HEK293 (cell line): ENCODE measurements at regions of chr6 and their contacts with region 1.

Region 1: GRCh38 chr6:122839477-122839876 is 50.4 kb downstream of the SMPDL3A start:
- H3K4me3 ChIP-seq: no peak overlapping the region
- H3K27ac ChIP-seq: no peak overlapping the region
- H3K4me1 ChIP-seq: no peaks in the 10 kb centered on the region
- CTCF ChIP-seq: 0 out of 2 replicates have a peak, but pooled peaks have one; percentile 21

Region 2: GRCh38 chr6:122491919-122492555 is 347.4 kb before region 1 on chr6:
- CTCF ChIA-PET with region 1: interaction called, 55 read pairs
- POLR2A ChIA-PET with region 1: no interaction called
- H3K4me3 ChIP-seq: no peak overlapping the region
- H3K27ac ChIP-seq: no peak overlapping the region
- H3K4me1 ChIP-seq: no peaks in the 10 kb centered on the region
- CTCF ChIP-seq: peak; percentile 53

Region 3: DNA sequence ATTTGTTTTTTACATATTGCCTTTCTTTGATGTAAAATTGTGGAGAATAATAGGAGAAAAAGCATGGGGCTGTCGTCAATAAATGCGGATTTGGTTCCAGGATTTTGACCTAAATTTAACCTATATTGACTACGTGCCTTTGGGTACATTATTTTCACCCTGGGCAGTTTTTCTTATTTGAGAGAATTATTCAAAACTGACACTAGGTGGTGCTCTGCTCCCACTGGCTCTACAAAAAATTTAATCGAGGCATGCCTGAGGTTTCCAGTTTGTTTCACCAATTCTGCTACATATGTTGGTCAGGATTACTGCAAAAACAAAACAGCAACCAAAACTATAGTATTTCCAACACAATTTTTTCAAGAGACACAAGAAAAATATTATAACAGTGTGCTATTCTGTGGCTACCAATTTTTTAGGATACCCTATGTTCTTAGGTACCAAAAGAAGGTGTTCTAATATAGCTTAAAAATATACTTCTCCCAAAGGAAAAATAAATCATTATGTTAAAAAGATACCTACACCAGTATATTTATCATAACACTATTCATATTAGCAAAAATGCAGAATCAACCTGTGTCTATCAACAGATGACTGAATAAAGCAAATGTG is 108.6 kb before region 1 on chr6:
- CTCF ChIA-PET with region 1: interaction called, 196 read pairs
- POLR2A ChIA-PET with region 1: interaction called, 6 read pairs
- H3K4me3 ChIP-seq: no peak overlapping the region
- H3K27ac ChIP-seq: no peak overlapping the region
- H3K4me1 ChIP-seq: no peaks in the 10 kb centered on the region
- CTCF ChIP-seq: peak; percentile 44; the same call in 1 of the 2 replicates

Region 4: DNA sequence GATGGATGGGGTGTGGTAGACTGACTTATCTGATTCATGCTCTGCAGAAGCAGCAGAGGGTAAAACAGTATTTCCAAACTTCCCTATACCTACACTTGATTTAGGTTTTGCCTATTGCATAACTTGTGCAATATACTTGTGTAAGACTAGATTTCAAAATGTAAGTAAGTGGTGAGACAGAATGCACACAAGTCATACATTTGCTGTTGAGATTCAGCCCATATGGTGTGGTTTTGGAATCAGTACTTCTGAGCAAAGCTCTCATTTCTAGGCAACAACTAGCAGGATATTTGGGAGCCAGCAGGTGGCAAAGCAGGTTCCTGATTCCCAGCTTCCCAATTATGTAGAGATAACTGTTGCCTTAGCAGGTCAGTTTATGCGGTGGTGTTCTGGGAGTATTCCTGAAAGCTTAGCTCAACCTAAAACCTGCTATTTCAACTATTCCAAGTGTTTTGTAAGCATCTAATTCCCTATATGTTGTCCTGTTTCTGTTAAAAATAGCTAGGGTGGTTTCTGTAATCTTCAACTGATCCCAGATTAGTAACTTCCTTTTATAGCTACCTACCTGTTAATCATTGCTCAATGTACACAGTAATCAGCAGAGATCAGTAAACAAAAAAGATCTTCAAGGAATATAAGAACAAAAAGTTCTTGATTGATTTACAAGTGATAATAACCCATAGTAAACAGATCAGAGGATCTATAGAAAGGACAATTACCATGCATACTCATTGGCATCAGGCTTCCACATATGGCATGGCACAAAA is 68.5 kb before region 1 on chr6:
- CTCF ChIA-PET with region 1: interaction called, 11 read pairs
- POLR2A ChIA-PET with region 1: no interaction called
- H3K4me3 ChIP-seq: no peak overlapping the region
- H3K27ac ChIP-seq: no peak overlapping the region
- H3K4me1 ChIP-seq: no peaks in the 10 kb centered on the region
- CTCF ChIP-seq: no peak

Region 5: GRCh38 chr6:122803171-122803661 is 36.3 kb before region 1 on chr6:
- CTCF ChIA-PET with region 1: interaction called, 13 read pairs
- POLR2A ChIA-PET with region 1: no interaction called
- H3K4me3 ChIP-seq: no peak overlapping the region
- H3K27ac ChIP-seq: no peak overlapping the region
- H3K4me1 ChIP-seq: peaks cover 3% of the 10 kb centered on the region; the same call in 1 of the 2 replicates
- CTCF ChIP-seq: no peak

Region 6: GRCh38 chr6:122878796-122879195 is 39.3 kb after region 1 on chr6:
- CTCF ChIA-PET with region 1: no interaction called
- POLR2A ChIA-PET with region 1: no interaction called
- H3K4me3 ChIP-seq: no peak overlapping the region
- H3K27ac ChIP-seq: no peak overlapping the region
- H3K4me1 ChIP-seq: no peaks in the 10 kb centered on the region
- CTCF ChIP-seq: no peak

Region 7: GRCh38 chr6:122995921-122996793 is 156.7 kb after region 1 on chr6 and contains the start of gene CLVS2:
- CTCF ChIA-PET with region 1: no interaction called
- POLR2A ChIA-PET with region 1: no interaction called
- H3K4me3 ChIP-seq: peak within 1 kb of the TSS; percentile 57
- H3K27ac ChIP-seq: no peak within 1 kb of the TSS; the same call in 1 of the 2 replicates
- H3K4me1 ChIP-seq: no peaks in the 10 kb centered on the region
- CTCF ChIP-seq: peak; percentile 9; the same call in 1 of the 2 replicates